Caco-2 (cell line): ENCODE measurements at regions of chr11 and their contacts with region 1.

Region 1: GRCh38 chr11:57249384-57250319 is 12.6 kb upstream of the APLNR start:
- DNase-seq: peak; percentile 53 to 72
- H3K4me3 ChIP-seq: no peak overlapping the region
- H3K4me3 Mint-ChIP-seq: no peak overlapping the region
- H3K27ac Mint-ChIP-seq: no peak overlapping the region
- H3K4me1 ChIP-seq: no peaks in the 10 kb centered on the region
- H3K4me1 Mint-ChIP-seq: no peaks in the 10 kb centered on the region
- H3K27me3 ChIP-seq: peaks cover 1% of the 10 kb centered on the region; the same call in 1 of the 2 replicates
- H3K27me3 Mint-ChIP-seq: peaks cover 8% of the 10 kb centered on the region
- CTCF ChIP-seq: peak; percentile 84 to 91

Region 2: DNA sequence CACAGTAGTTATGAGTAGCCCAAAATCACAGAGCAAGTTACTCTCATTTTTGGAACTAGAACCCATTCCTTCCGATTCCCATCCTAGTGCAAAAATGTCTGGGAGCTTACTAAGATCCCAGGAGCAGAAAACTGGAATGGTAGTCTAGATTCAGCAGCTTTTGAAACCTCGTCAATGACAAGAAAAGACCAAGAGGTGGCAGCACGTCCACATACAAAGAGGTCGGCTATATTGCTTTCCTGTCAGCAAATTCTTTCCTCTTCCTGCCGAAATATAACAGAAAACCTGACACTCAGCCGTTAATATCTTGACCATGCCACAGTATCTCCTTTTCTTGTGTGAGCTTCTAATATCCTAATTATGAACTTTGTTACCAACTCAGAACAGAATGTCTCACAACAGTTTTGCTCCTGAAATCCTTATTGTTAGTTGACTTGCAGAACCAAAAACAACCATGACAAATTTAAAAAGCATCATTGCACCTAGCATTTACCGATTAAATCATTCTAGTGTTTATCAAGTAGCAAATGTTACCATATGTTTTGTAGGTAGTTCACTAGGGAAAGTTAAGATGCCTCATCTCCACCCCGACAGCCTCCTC is 408.3 kb before region 1 on chr11:
- CTCF ChIA-PET with region 1: interaction called, 80 read pairs
- POLR2A ChIA-PET with region 1: no interaction called
- intact Hi-C with region 1: loop called (anchors 1 kb)
- DNase-seq: peak; percentile 50 to 60
- H3K4me3 ChIP-seq: no peak overlapping the region
- H3K4me3 Mint-ChIP-seq: no peak overlapping the region
- H3K27ac Mint-ChIP-seq: no peak overlapping the region
- H3K4me1 ChIP-seq: no peaks in the 10 kb centered on the region
- H3K4me1 Mint-ChIP-seq: no peaks in the 10 kb centered on the region
- H3K27me3 ChIP-seq: no peaks in the 10 kb centered on the region
- H3K27me3 Mint-ChIP-seq: peaks cover 2% of the 10 kb centered on the region
- CTCF ChIP-seq: peak; percentile 73 to 87

Region 3: GRCh38 chr11:57116654-57117053 is 133.0 kb before region 1 on chr11:
- CTCF ChIA-PET with region 1: interaction called, 64 read pairs
- POLR2A ChIA-PET with region 1: interaction called, 3 read pairs
- intact Hi-C with region 1: loop called (anchors 1 kb)
- DNase-seq: peak; percentile 49 to 57
- H3K4me3 ChIP-seq: no peak overlapping the region
- H3K4me3 Mint-ChIP-seq: no peak overlapping the region
- H3K27ac Mint-ChIP-seq: no peak overlapping the region
- H3K4me1 ChIP-seq: no peaks in the 10 kb centered on the region; the same call in 1 of the 2 replicates
- H3K4me1 Mint-ChIP-seq: no peaks in the 10 kb centered on the region
- H3K27me3 ChIP-seq: no peaks in the 10 kb centered on the region
- H3K27me3 Mint-ChIP-seq: peaks cover 6% of the 10 kb centered on the region
- CTCF ChIP-seq: peak; percentile 60 to 74

Region 4: GRCh38 chr11:57131080-57131790 is 118.4 kb before region 1 on chr11:
- CTCF ChIA-PET with region 1: interaction called, 44 read pairs
- POLR2A ChIA-PET with region 1: no interaction called
- intact Hi-C with region 1: loop called (anchors 1 kb)
- DNase-seq: peak; percentile 53 to 58
- H3K4me3 ChIP-seq: no peak overlapping the region
- H3K4me3 Mint-ChIP-seq: no peak overlapping the region
- H3K27ac Mint-ChIP-seq: no peak overlapping the region
- H3K4me1 ChIP-seq: no peaks in the 10 kb centered on the region; the same call in 1 of the 2 replicates
- H3K4me1 Mint-ChIP-seq: no peaks in the 10 kb centered on the region
- H3K27me3 ChIP-seq: 0 out of 2 replicates have a peak, but pooled peaks cover 2% of the 10 kb centered on the region
- H3K27me3 Mint-ChIP-seq: peaks cover 26% of the 10 kb centered on the region
- CTCF ChIP-seq: peak; percentile 63 to 77

Region 5: GRCh38 chr11:57172031-57172430 is 77.6 kb before region 1 on chr11:
- CTCF ChIA-PET with region 1: no interaction called
- POLR2A ChIA-PET with region 1: no interaction called
- intact Hi-C with region 1: no loop called
- DNase-seq: no peak
- H3K4me3 ChIP-seq: no peak overlapping the region
- H3K4me3 Mint-ChIP-seq: no peak overlapping the region
- H3K27ac Mint-ChIP-seq: no peak overlapping the region
- H3K4me1 ChIP-seq: no peaks in the 10 kb centered on the region
- H3K4me1 Mint-ChIP-seq: peaks cover 2% of the 10 kb centered on the region
- H3K27me3 ChIP-seq: no peaks in the 10 kb centered on the region
- H3K27me3 Mint-ChIP-seq: peaks cover 9% of the 10 kb centered on the region
- CTCF ChIP-seq: no peak

Region 6: GRCh38 chr11:57277845-57278709 is 28.4 kb after region 1 on chr11:
- CTCF ChIA-PET with region 1: interaction called, 10 read pairs
- POLR2A ChIA-PET with region 1: no interaction called
- intact Hi-C with region 1: loop called (anchors 1 kb)
- DNase-seq: peak; percentile 83 to 84
- H3K4me3 ChIP-seq: peak overlapping the region; percentile 31
- H3K4me3 Mint-ChIP-seq: peak overlapping the region; percentile 69
- H3K27ac Mint-ChIP-seq: peak overlapping the region; percentile 78
- H3K4me1 ChIP-seq: peaks cover 10% of the 10 kb centered on the region
- H3K4me1 Mint-ChIP-seq: peaks cover 15% of the 10 kb centered on the region
- H3K27me3 ChIP-seq: no peaks in the 10 kb centered on the region
- H3K27me3 Mint-ChIP-seq: peaks cover 3% of the 10 kb centered on the region
- CTCF ChIP-seq: peak; percentile 80 to 93

Region 7: GRCh38 chr11:57324886-57325734 is 75.5 kb after region 1 on chr11 and contains the start of gene TNKS1BP1:
- CTCF ChIA-PET with region 1: interaction called, 13 read pairs
- POLR2A ChIA-PET with region 1: no interaction called
- intact Hi-C with region 1: no loop called
- DNase-seq: peak; percentile 98 to 99
- H3K4me3 ChIP-seq: peak within 1 kb of the TSS; percentile 79
- H3K4me3 Mint-ChIP-seq: peak within 1 kb of the TSS; percentile 88
- H3K27ac Mint-ChIP-seq: peak within 1 kb of the TSS; percentile 95
- H3K4me1 ChIP-seq: peaks cover 52% of the 10 kb centered on the region
- H3K4me1 Mint-ChIP-seq: peaks cover 57% of the 10 kb centered on the region
- H3K27me3 ChIP-seq: no peaks in the 10 kb centered on the region
- H3K27me3 Mint-ChIP-seq: no peaks in the 10 kb centered on the region
- CTCF ChIP-seq: no peak
- total RNA-seq, gene TNKS1BP1: 107 and 120 TPM in 2 replicates